OCI-LY7 (cell line): ENCODE measurements at regions of chr17 and their contacts with region 1.

Region 1: GRCh38 chr17:41864836-41865595 is at the start of gene KLHL11:
- DNase-seq: peak; percentile 92
- H3K4me3 ChIP-seq: peak within 1 kb of the TSS; percentile 92
- H3K27ac ChIP-seq: peak within 1 kb of the TSS; percentile 82
- H3K4me1 ChIP-seq: peaks cover 21% of the 10 kb centered on the region
- CTCF ChIP-seq: no peak
- total RNA-seq, gene KLHL11: 29.9 and 35.4 TPM in 2 replicates

Region 2: DNA sequence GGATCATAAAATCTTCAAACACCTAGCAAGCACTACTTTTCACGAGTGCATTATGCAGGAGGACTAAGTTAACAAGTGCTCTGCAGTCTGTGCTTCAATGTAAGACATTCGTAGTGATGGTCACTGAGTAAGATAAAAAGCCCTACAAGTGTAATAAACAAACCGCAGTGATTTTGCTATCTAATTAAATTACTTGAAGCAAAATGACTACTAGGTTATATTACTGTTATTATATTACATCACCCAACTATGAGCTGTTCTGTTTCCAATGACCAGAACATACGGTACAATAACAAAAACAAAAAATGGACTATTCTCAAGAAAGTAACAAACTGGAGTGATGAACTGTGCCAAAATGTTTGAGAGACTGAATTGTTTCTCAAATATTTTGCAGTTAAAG is 16.2 kb before region 1 on chr17:
- CTCF ChIA-PET with region 1: no interaction called
- POLR2A ChIA-PET with region 1: interaction called, 11 read pairs
- intact Hi-C with region 1: no loop called
- DNase-seq: no peak
- H3K4me3 ChIP-seq: no peak overlapping the region
- H3K27ac ChIP-seq: no peak overlapping the region
- H3K4me1 ChIP-seq: peaks cover 29% of the 10 kb centered on the region
- CTCF ChIP-seq: no peak